ENCODE measurements at regions of chr18 and their contacts with region 1.

Region 1: DNA sequence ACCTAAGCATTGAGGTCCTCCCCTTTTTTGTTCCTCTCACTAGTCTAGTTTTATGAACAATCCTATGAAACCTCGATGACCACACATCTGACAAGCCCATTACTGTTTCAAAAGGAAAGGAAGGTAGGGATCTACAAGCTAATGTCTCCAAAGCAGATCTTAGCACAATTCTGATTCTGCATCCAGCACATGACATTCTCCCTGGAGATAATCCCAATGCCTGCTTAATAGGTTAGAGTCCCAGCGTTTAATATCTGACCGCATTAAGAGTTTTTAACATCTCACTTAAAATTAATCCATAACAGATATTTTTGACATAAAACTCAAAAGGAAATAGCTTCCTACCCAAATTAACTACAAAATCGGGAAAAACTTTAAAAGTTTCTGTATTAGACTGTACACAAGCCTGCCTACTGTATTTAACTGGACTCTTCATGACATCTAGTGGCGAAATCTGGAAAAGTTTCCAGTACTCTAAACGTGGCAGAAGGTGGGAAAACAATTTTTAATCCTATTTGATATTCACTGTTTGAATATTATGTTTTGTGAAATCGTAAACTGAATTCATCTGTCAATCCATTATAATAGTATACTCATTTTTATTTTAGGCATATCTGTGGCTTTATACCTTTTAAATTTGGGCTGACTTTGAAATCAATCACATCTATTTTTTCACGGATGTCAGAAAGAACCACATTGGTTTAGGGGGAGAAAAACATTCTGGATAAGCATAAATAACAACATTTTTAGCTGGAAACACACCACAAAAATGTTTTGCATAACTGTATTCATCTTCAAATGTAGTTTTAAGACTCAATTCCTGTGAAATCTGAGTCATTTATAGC is 62.4 kb downstream of the TXNL1 start:
- DNase-seq: peak; percentile 48
- CTCF ChIP-seq: peak; percentile 32

Region 2: DNA sequence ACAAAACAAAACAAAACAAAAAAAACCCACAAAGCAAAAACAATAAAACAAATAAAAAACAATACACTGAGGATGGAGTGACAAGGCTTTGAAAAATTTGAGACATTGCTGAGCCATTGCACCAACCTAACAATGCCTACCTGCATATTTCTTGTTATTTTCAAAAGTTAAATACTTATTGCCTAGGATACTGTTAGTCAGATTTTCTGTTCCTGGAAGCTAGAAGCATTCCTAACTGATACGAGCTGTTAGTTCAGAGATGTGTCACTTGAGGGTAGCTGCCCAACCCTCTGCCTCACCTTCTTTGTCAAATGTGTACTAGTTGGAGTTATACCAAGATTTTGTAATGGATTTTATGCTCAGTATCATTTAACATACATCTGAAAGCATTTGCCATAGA is 124.9 kb before region 1 on chr18:
- CTCF ChIA-PET with region 1: no interaction called
- POLR2A ChIA-PET with region 1: no interaction called
- DNase-seq: no peak
- CTCF ChIP-seq: no peak

Region 3: GRCh38 chr18:56559044-56559443 is 17.0 kb before region 1 on chr18:
- CTCF ChIA-PET with region 1: no interaction called
- POLR2A ChIA-PET with region 1: no interaction called
- DNase-seq: no peak
- CTCF ChIP-seq: no peak

Region 4: DNA sequence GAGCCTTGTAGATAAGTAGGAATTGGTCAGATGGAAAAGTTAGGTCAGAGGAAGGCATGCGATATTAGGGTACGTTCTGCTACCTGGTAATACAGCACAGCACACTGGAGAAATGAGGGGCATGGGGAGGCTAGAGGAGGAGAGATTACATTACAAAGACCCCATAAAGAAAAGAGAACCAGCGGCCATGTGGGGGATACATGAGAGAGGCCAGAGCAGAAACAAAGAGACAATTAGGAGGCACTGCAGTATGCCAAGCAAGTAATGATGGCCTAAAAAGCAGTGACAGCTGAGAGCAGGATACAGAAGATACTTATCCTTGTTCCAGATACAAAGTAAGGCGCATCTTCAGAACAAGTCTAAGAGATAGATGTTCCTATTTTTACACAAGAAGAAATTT is 22.4 kb after region 1 on chr18:
- CTCF ChIA-PET with region 1: interaction called, 12 read pairs
- POLR2A ChIA-PET with region 1: no interaction called
- DNase-seq: no peak
- CTCF ChIP-seq: no peak